Naive thymus-derived CD4-positive, alpha-beta T cell (primary cell): ENCODE measurements at regions of chr10 and their contacts with region 1.

Region 1: DNA sequence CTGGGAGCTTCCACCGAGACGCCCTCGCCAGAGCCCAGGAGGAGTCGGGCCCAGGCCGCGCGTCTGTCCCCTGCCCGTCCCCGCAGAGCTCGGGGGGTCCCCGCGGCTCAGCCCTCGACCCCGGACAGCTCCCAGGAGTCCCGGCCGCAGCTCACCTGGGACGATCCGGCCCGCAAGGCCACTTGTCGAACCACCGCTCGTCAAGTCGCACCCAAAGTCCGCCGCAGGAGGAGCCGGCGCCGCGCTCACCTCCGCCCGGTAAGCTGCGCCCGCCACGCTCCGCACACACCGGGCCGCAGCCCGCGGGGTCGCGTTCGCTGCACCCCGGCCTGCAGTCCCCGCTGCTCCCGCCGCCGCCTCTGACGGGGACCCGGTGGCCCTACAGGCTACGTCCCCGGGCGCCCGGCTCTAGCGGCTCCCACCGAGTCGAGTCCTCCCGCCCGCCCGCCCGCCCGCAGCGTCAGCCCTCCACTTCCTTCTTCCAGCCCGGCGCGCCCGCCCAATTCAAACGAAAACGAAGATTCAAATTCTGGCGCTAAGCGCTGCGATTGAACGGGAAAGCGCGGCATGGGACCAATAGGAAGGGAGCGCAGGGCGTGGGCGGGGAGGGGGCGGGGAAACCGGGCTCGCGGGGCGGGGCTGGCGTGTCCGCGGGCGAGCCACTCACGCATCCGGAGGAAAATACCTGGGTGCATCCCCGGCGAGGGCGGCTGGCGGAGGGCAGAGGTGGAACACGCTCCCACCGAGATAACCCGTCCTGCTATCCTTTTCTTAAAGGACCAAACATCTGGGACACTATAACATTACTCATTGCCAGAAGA is at the start of gene MKI67:
- DNase-seq: peak; percentile 68 to 88 (median 85)
- ATAC-seq: peak; percentile 98
- H3K4me3 ChIP-seq: peak within 1 kb of the TSS; percentile 82
- H3K4me3 Mint-ChIP-seq: peak within 1 kb of the TSS; percentile 86 to 94 (median 88)
- H3K27ac ChIP-seq: peak within 1 kb of the TSS; percentile 73
- H3K27ac Mint-ChIP-seq: peak within 1 kb of the TSS in 8 of 9 donors; percentile 56 to 97 (median 71)
- H3K4me1 ChIP-seq: peaks cover 9 to 18% of the 10 kb centered on the region in 2 donors
- H3K4me1 Mint-ChIP-seq: peaks cover 6 to 44% (median 19%) of the 10 kb centered on the region in 7 donors
- H3K27me3 ChIP-seq: peaks cover 10 to 11% of the 10 kb centered on the region in 2 donors
- H3K27me3 Mint-ChIP-seq: peaks cover 7 to 37% (median 33%) of the 10 kb centered on the region in 5 donors
- total RNA-seq, gene MKI67: 0.05 to 219 (median 1.6) TPM

Region 2: GRCh38 chr10:128064108-128064969 is 61.8 kb before region 1 on chr10:
- CTCF ChIA-PET with region 1: no interaction called
- POLR2A ChIA-PET with region 1: interaction called, 3 read pairs
- intact Hi-C with region 1: loop called (anchors 5 kb)
- DNase-seq: peak in 8 of 9 donors; percentile 52 to 77 (median 67)
- ATAC-seq: peak; percentile 71
- H3K4me3 ChIP-seq: peak overlapping the region; percentile 52
- H3K4me3 Mint-ChIP-seq: peak overlapping the region; percentile 75 to 96 (median 86)
- H3K27ac ChIP-seq: peak overlapping the region; percentile 61
- H3K27ac Mint-ChIP-seq: peak overlapping the region; percentile 72 to 93 (median 87)
- H3K4me1 ChIP-seq: peaks cover 42 to 53% of the 10 kb centered on the region in 2 donors
- H3K4me1 Mint-ChIP-seq: peaks cover 50 to 87% (median 76%) of the 10 kb centered on the region in 7 donors
- H3K27me3 ChIP-seq: no peaks in the 10 kb centered on the region
- H3K27me3 Mint-ChIP-seq: no peaks in the 10 kb centered on the region

Region 3: DNA sequence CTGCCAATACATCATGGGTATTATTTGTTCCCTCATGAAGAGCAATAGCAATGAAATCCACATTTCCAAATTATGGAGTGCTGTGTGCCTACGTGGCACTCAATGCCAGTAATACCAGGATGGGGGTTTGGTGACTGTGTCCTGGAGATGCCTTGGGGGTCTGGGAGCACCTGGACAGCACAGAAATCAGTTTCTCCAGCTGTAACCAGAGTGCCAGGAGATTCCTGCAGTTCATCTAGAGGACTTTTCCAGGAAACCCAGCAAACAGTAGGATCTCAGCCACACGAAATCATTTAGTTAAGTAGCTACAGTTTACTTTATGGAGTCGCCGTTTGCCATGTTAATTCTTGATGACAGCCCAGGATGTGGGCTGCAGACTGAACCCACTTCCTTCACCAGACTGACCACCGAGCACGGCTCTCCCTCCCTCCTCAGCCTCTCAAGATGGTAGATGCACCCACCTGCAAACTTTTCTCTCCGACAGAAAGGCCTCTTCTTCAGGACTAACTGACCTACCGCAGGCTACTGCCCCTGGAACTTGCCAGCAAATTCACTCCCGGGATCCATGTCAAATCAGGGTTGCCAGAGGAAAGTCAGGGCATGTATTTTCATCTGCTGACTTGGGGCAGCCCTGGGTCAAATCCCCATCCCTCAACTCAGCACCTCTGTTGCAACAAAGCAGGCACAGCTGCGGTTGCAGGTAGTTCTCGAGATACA is 30.2 kb before region 1 on chr10:
- CTCF ChIA-PET with region 1: no interaction called
- POLR2A ChIA-PET with region 1: no interaction called
- intact Hi-C with region 1: loop called in 1 of 2 experiments (anchors 2 kb)
- DNase-seq: no peak
- ATAC-seq: peak; percentile 64
- H3K4me3 ChIP-seq: peak overlapping the region; percentile 2
- H3K4me3 Mint-ChIP-seq: peak overlapping the region in 4 of 10 donors; percentile 23 to 69 (median 48)
- H3K27ac ChIP-seq: no peak overlapping the region
- H3K27ac Mint-ChIP-seq: peak overlapping the region in 1 of 9 donors; percentile 83
- H3K4me1 ChIP-seq: peaks cover 9 to 25% of the 10 kb centered on the region in 2 donors
- H3K4me1 Mint-ChIP-seq: peaks cover 12 to 41% (median 13%) of the 10 kb centered on the region in 7 donors
- H3K27me3 ChIP-seq: no peaks in the 10 kb centered on the region
- H3K27me3 Mint-ChIP-seq: no peaks in the 10 kb centered on the region

Region 4: DNA sequence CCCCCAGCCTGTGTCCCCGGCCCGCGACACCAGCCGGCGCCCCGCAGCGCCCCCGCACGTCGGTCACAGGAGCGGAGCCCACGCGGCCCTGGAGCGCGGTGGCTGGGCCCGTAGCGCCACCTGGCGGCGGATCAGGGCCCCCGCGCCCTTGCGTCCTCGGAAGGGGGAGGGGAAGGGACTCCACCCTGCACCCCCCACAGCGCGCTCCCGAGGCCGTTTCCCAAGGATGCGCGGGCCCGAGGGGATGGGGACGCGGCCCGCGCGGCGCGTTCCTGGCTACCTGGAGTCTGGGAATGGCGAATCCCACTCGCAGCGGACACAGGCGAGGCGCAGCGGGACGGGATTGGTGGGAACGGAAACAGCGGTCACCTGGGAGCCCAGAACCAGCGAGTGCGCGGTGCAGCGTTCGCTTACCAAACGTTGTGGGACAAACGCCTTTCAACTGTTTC is 23.9 kb after region 1 on chr10:
- CTCF ChIA-PET with region 1: no interaction called
- POLR2A ChIA-PET with region 1: no interaction called
- intact Hi-C with region 1: loop called (anchors 1 kb)
- DNase-seq: peak; percentile 71 to 89 (median 83)
- ATAC-seq: peak; percentile 99
- H3K4me3 ChIP-seq: peak overlapping the region; percentile 79
- H3K4me3 Mint-ChIP-seq: peak overlapping the region; percentile 32 to 77 (median 60)
- H3K27ac ChIP-seq: no peak overlapping the region
- H3K27ac Mint-ChIP-seq: peak overlapping the region in 1 of 9 donors; percentile 14
- H3K4me1 ChIP-seq: no peaks in the 10 kb centered on the region
- H3K4me1 Mint-ChIP-seq: peaks cover 0 to 16% (median 3%) of the 10 kb centered on the region in 7 donors
- H3K27me3 ChIP-seq: no peaks in the 10 kb centered on the region
- H3K27me3 Mint-ChIP-seq: peaks cover 0 to 26% (median 0%) of the 10 kb centered on the region in 5 donors

Region 5: DNA sequence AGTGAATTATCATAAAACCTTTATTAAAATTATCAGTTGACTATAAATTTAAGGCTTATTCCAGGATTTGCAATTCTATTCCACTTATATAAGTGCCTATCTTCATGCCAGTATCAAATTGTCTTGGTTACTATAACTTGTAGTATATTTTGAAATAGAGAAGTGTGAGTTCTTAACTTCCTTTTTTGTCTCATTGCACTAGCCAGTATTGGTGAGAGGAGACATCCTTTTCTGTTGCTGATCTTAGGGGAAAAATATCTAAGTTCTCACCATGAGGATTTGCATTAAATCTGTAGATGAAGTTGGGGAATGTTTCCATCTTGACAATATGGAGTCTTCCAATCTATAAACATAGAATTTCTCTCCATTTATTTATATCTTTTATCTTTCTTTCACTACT is 104.2 kb after region 1 on chr10:
- CTCF ChIA-PET with region 1: no interaction called
- POLR2A ChIA-PET with region 1: no interaction called
- intact Hi-C with region 1: no loop called
- DNase-seq: no peak
- ATAC-seq: no peak
- H3K4me3 ChIP-seq: no peak overlapping the region
- H3K4me3 Mint-ChIP-seq: no peak overlapping the region
- H3K27ac ChIP-seq: no peak overlapping the region
- H3K27ac Mint-ChIP-seq: no peak overlapping the region
- H3K4me1 ChIP-seq: no peaks in the 10 kb centered on the region
- H3K4me1 Mint-ChIP-seq: no peaks in the 10 kb centered on the region
- H3K27me3 ChIP-seq: no peaks in the 10 kb centered on the region
- H3K27me3 Mint-ChIP-seq: peaks cover 10 to 35% (median 28%) of the 10 kb centered on the region in 5 donors

Region 6: GRCh38 chr10:129466703-129467358 is 1340.7 kb after region 1 on chr10 and contains the start of gene MGMT:
- CTCF ChIA-PET with region 1: no interaction called
- POLR2A ChIA-PET with region 1: no interaction called
- intact Hi-C with region 1: loop called in 1 of 2 experiments (anchors 10 kb)
- DNase-seq: peak; percentile 91 to 98 (median 96)
- ATAC-seq: peak; percentile 99
- H3K4me3 ChIP-seq: peak within 1 kb of the TSS; percentile 74
- H3K4me3 Mint-ChIP-seq: peak within 1 kb of the TSS; percentile 74 to 90 (median 87)
- H3K27ac ChIP-seq: peak within 1 kb of the TSS; percentile 85
- H3K27ac Mint-ChIP-seq: peak within 1 kb of the TSS; percentile 71 to 91 (median 84)
- H3K4me1 ChIP-seq: peaks cover 11 to 13% of the 10 kb centered on the region in 2 donors
- H3K4me1 Mint-ChIP-seq: peaks cover 8 to 31% (median 26%) of the 10 kb centered on the region in 7 donors
- H3K27me3 ChIP-seq: no peaks in the 10 kb centered on the region
- H3K27me3 Mint-ChIP-seq: no peaks in the 10 kb centered on the region
- total RNA-seq, gene MGMT: 17.6 to 23.9 (median 21.8) TPM